Activated CD4-positive, alpha-beta T cell treated with anti-CD3 and anti-CD28 coated beads for 36 hours (primary cell): ENCODE measurements at regions of chr6 and their contacts with region 1.

Region 1: DNA sequence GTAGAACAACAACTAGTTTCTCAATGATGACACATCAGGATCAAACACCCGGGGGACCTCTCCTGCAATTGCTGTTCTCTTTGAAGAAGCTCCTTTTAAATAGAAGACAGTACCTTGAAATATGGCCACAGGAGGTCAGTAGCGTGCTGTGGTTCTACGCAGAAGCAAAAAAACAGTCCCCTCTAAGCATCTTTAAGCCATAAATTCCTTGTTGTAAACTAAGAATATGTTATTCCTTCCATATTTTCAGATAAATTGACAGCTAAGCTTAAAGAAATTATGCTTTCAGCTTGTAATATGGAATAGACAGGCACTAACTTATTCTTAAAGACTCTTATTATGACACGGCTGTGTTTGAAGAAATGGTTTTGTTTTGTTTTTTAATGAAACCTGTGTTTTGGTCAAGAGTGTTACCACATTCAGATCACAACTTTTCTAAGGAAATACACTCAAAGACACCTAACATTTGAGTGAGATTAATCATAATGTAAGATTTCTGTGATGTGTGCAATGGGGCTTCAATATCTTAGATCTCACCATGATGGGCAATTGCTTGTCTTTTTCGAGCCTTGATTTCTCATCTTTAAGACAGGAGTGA is 49.7 kb upstream of the IL20RA start:
- DNase-seq: peak; percentile 73
- ATAC-seq: peak; percentile 76
- H3K4me3 Mint-ChIP-seq: no peak overlapping the region
- H3K27ac Mint-ChIP-seq: no peak overlapping the region
- H3K4me1 Mint-ChIP-seq: peaks cover 17% of the 10 kb centered on the region
- H3K27me3 Mint-ChIP-seq: peaks cover 2% of the 10 kb centered on the region

Region 2: GRCh38 chr6:136593748-136594490 is 500.6 kb before region 1 on chr6:
- CTCF ChIA-PET with region 1: no interaction called
- POLR2A ChIA-PET with region 1: no interaction called
- intact Hi-C with region 1: no loop called
- DNase-seq: peak; percentile 70
- ATAC-seq: peak; percentile 92
- H3K4me3 Mint-ChIP-seq: peak overlapping the region; percentile 51
- H3K27ac Mint-ChIP-seq: peak overlapping the region; percentile 91
- H3K4me1 Mint-ChIP-seq: peaks cover 23% of the 10 kb centered on the region
- H3K27me3 Mint-ChIP-seq: no peaks in the 10 kb centered on the region

Region 3: GRCh38 chr6:136657666-136658065 is 436.8 kb before region 1 on chr6:
- CTCF ChIA-PET with region 1: no interaction called
- POLR2A ChIA-PET with region 1: no interaction called
- intact Hi-C with region 1: no loop called
- DNase-seq: no peak
- ATAC-seq: no peak
- H3K4me3 Mint-ChIP-seq: no peak overlapping the region
- H3K27ac Mint-ChIP-seq: no peak overlapping the region
- H3K4me1 Mint-ChIP-seq: no peaks in the 10 kb centered on the region
- H3K27me3 Mint-ChIP-seq: no peaks in the 10 kb centered on the region

Region 4: GRCh38 chr6:137165375-137166246 is 71.1 kb after region 1 on chr6:
- CTCF ChIA-PET with region 1: interaction called, 6 read pairs
- POLR2A ChIA-PET with region 1: no interaction called
- intact Hi-C with region 1: loop called (anchors 5 kb)
- DNase-seq: peak; percentile 58
- ATAC-seq: no peak
- H3K4me3 Mint-ChIP-seq: no peak overlapping the region
- H3K27ac Mint-ChIP-seq: peak overlapping the region; percentile 26
- H3K4me1 Mint-ChIP-seq: peaks cover 26% of the 10 kb centered on the region
- H3K27me3 Mint-ChIP-seq: peaks cover 25% of the 10 kb centered on the region

Region 5: DNA sequence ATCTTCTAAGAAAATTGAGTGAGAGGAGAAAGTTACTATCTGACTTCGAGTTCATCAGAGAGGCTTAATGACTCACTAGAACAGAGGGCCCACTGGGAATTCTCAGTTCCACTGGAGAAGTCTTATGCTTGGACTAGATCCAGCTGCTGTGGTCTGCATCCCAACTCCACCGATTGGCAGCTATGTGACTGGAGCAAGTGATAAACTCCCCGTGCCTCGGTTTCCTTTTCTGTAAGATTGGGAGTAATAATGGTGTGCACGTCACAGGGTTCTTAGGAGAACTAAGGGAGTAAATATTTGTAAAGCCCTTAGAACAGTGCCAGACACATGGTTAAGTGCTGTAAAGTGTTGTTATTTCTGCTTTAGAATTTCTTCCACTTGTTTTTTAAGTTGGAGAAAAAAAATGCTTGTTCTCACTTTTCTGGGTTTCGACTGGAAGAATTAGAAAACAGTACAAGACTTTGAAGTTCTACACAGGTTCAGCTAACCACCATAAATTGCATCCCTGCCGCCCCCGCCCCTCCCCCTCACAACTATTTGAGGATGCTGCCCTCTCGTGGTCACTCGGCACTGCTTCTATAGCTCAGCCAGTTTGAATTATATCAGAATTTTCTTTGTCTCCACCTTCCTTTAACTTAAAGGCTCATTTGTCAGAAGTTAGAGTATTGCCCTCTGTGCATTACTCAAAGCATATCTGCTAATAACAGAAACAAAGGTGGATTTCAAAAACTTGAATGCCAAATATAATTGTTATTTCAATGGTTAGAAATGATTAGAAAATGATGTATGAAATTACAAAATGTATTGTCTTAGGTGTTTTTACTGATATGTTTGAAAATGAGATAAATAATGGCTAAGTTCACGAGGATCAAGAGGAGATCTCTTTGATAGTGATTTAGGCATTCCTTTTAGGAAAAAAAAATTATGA is 219.7 kb after region 1 on chr6:
- CTCF ChIA-PET with region 1: interaction called, 30 read pairs
- POLR2A ChIA-PET with region 1: no interaction called
- intact Hi-C with region 1: loop called (anchors 1 kb)
- DNase-seq: peak; percentile 87
- ATAC-seq: peak; percentile 70
- H3K4me3 Mint-ChIP-seq: no peak overlapping the region
- H3K27ac Mint-ChIP-seq: no peak overlapping the region
- H3K4me1 Mint-ChIP-seq: no peaks in the 10 kb centered on the region
- H3K27me3 Mint-ChIP-seq: peaks cover 8% of the 10 kb centered on the region

Region 6: GRCh38 chr6:137489046-137490005 is 394.8 kb after region 1 on chr6:
- CTCF ChIA-PET with region 1: no interaction called
- POLR2A ChIA-PET with region 1: no interaction called
- intact Hi-C with region 1: loop called in 1 of 2 experiments (anchors 1 kb)
- DNase-seq: no peak
- ATAC-seq: no peak
- H3K4me3 Mint-ChIP-seq: no peak overlapping the region
- H3K27ac Mint-ChIP-seq: no peak overlapping the region
- H3K4me1 Mint-ChIP-seq: peaks cover 46% of the 10 kb centered on the region
- H3K27me3 Mint-ChIP-seq: peaks cover 78% of the 10 kb centered on the region